Heart left ventricle (tissue), 16 donors: ENCODE measurements at regions of chr10 and their contacts with region 1.

Region 1: GRCh38 chr10:27558612-27559020 is 54.5 kb downstream of the RAB18 start:
- DNase-seq: peak in 4 of 5 donors; percentile 37 to 57 (median 42)
- ATAC-seq: peak; percentile 71 to 89 (median 86)
- H3K4me3 ChIP-seq: no peak overlapping the region
- H3K27ac ChIP-seq: no peak overlapping the region
- H3K4me1 ChIP-seq: peaks cover 0 to 4% (median 0%) of the 10 kb centered on the region in 12 donors
- H3K27me3 ChIP-seq: no peaks in the 10 kb centered on the region
- CTCF ChIP-seq: peak; percentile 51 to 81 (median 66)
- POLR2A ChIP-seq: no peak

Region 2: DNA sequence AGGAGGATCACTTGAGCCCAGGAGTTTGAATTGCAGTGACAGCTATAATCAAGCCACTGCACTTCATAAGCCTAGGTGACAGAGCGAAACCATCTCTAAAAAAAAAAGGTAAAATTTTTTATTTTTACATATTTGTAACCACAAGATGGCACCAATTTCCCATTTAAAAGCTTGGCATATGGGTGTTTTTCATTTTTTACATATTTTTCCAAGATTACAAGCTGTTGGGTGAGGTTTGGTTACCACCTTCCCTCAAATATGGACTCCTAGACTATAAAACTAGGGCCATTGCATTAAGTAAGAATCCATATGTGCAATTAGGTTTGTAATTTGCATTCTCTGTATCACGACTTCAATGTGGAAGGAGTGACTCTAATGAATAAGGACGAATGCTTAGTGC is 188.7 kb before region 1 on chr10:
- intact Hi-C with region 1: no loop called
- DNase-seq: no peak
- ATAC-seq: no peak
- H3K4me3 ChIP-seq: no peak overlapping the region
- H3K27ac ChIP-seq: no peak overlapping the region
- H3K4me1 ChIP-seq: no peaks in the 10 kb centered on the region
- H3K27me3 ChIP-seq: peaks cover 0 to 12% (median 0%) of the 10 kb centered on the region in 9 donors
- CTCF ChIP-seq: peak in 4 of 12 donors; percentile 7 to 24 (median 16)
- POLR2A ChIP-seq: no peak

Region 3: DNA sequence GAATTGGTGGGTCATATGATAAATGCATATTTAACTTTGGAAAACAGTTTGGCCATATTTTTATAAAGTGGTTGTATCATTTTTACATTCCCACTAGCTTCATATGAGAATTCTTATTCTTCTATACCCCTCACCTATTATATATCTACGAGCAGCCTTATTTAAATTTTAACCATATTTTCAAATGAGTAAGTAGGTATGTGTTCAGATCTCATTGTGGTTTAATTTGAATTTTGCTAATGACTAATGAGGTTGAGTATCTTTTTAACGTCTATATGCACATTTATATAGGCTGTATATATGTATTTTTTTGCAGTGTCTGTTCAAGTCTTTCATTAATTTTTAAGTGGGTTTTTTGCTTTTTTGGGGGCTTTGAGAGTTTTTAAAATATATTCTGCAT is 40.4 kb before region 1 on chr10:
- intact Hi-C with region 1: no loop called
- DNase-seq: no peak
- ATAC-seq: no peak
- H3K4me3 ChIP-seq: no peak overlapping the region
- H3K27ac ChIP-seq: no peak overlapping the region
- H3K4me1 ChIP-seq: peaks cover 0 to 22% (median 12%) of the 10 kb centered on the region in 12 donors
- H3K27me3 ChIP-seq: no peaks in the 10 kb centered on the region
- CTCF ChIP-seq: no peak
- POLR2A ChIP-seq: no peak

Region 4: DNA sequence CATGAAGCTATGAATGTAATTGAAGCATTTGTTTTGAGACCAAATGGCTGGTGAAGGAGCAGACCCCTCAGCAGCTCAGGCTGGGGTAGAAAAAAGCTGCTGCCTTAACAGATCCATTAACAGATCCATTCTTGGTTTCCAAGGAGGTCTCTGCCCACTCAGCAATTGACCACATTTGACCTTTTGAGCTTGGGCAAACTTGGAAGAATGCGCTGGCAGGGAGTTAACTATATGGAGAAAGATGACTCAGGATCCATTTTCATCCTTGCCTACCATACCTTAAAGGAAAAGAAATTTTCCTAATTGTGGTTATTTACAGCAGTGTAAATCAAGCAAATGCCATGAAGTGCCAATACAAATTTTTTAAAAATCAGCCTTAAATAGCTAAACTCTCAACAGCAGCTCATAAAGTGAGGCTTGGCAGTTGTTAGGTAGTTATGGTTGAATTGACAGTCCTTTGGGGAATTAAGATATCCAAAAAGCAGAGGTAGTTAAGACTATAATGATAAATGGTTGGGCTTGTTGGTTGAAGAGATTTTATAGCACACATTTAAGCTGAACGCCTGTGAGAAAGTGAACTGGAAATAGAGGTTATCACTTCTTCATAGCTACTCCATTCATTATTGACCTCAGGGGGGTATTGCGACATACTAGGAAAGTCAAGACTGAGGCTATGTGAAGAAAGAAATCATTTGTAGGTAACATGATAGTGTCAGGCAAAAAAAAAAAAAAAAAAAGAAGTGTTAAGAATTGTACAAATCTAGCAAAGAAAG is 103.1 kb after region 1 on chr10:
- intact Hi-C with region 1: loop called in 8 of 10 experiments (anchors 1 to 10 kb)
- DNase-seq: no peak
- ATAC-seq: no peak
- H3K4me3 ChIP-seq: no peak overlapping the region
- H3K27ac ChIP-seq: no peak overlapping the region
- H3K4me1 ChIP-seq: peaks cover 0 to 25% (median 0%) of the 10 kb centered on the region in 12 donors
- H3K27me3 ChIP-seq: no peaks in the 10 kb centered on the region
- CTCF ChIP-seq: no peak
- POLR2A ChIP-seq: no peak

Region 5: DNA sequence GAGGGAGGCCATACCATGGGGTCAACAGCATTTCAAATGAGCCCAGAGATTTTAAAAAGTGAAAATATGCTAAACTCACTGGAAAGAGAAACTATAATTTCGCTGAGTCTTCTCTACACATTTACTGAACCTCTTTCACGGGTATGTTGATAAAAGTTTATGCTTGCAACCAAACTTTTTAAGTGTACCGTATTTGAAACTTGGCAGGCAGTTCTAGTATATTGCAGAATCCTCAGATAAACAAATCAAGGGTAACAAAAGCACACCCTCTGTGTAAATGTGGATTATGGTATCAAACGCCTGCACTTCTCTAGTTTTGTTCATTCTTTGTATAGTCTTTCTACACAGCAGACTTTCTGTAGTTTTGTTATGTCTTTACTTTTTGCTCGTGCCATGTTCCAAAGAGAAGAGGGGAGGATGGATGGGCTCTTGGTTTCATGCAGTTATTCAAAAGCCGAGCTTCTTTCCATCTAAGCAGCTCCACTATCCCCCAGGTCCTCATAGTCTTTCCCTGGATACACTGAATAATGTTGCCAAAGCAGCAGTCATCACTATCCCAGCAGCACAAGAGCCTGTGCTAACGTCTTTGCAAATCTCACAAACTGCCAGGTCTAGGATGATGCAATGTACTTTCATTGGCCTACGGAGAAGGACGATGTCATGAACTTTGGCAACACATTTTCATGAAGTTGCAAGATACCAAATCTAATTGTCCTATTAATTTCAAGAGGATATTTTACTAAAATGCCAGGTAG is 613.0 kb after region 1 on chr10:
- intact Hi-C with region 1: loop called in 4 of 10 experiments (anchors 5 to 10 kb)
- DNase-seq: no peak
- ATAC-seq: peak in 3 of 4 donors; percentile 65 to 96 (median 86)
- H3K4me3 ChIP-seq: peak overlapping the region in 1 of 12 donors; percentile 30
- H3K27ac ChIP-seq: peak overlapping the region in 1 of 12 donors; percentile 60
- H3K4me1 ChIP-seq: peaks cover 0 to 16% (median 5%) of the 10 kb centered on the region in 12 donors
- H3K27me3 ChIP-seq: no peaks in the 10 kb centered on the region
- CTCF ChIP-seq: no peak
- POLR2A ChIP-seq: no peak

Region 6: DNA sequence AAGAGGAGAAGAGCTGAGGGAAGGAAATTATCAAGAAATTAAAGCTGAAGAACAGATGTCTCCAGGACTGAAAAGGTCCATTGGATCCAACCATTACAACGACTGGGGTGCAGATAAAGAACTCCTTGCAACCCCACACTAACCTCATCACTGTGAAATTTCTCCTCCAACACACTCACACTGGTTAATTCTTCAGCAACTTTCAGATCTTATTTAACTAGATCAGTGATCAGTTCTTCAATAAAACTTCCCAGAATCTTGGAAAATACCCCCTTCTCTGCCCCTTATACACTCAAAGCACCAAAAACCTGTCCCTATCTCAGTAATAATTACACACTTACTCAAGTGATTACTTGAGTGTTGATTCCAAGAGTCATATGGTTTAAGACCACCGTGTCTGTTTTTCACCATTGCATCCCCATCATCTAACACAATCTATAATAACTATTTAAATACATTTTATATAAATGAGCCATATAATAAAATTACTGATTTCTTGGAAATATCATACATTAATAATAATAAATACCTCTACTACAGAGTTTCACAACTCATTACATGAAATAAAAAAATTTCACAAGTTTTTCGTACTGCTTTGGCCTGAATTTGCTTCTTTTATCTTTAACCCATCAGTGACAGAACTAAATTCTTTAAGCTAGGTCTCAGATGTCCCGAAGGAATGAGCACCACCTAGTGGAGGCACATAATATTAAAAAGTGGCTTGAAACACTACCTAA is 620.6 kb after region 1 on chr10:
- intact Hi-C with region 1: loop called in 4 of 10 experiments (anchors 5 to 10 kb)
- DNase-seq: peak in 1 of 5 donors; percentile 9
- ATAC-seq: peak in 3 of 4 donors; percentile 46 to 65 (median 57)
- H3K4me3 ChIP-seq: peak overlapping the region in 3 of 12 donors; percentile 25 to 45 (median 28)
- H3K27ac ChIP-seq: peak overlapping the region in 1 of 12 donors; percentile 66
- H3K4me1 ChIP-seq: peaks cover 0 to 16% (median 7%) of the 10 kb centered on the region in 12 donors
- H3K27me3 ChIP-seq: no peaks in the 10 kb centered on the region
- CTCF ChIP-seq: peak; percentile 60 to 82 (median 71)
- POLR2A ChIP-seq: no peak